ENCODE measurements at regions of chr10 and their contacts with region 1.

Region 1: DNA sequence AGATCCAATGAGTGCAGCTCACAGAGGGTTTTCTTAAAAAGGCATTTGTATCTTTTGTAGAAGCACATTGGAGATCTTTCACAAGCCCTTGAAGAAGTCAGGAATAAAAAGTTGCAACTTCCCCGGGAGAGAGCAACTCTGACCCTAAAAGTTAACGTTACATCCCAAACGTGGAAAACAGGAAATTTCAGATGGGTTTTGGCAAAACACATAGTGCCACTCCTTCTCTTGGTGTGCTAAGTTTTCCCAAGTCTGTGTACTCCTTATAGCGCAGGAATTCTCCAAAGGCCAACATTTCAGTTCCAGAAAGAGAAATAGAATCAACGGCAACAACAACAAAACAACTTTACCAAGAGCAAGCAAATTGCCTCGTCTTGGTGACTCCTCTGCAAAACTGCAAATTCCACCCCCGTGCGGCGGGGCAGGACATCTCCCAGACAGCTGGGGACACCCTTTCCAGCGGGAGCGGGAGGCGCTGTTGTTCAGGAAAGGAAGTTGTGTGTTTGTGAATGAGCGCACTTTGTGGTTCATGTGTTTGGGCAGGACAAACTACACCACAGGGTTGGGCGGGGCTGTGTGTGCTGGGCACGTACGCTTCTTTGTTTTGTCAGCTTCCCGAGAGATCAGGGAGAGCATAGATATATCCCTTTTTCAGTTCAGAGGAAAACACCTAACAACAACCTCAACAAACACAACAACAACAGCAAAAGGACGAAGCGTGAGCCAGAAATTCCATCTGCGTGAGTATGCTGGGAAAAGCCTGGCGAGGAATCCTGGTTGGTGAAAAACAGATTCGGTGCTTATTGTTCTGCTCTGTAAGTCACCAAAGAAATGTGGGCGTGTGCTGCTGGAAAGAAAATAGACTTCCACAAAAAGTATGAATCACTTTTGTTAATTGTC is 294.7 kb upstream of the PITRM1 start:
- DNase-seq: peak; percentile 89
- ATAC-seq: peak; percentile 69

Region 2: GRCh38 chr10:3372281-3372680 is 95.0 kb before region 1 on chr10:
- intact Hi-C with region 1: no loop called
- DNase-seq: no peak
- ATAC-seq: no peak

Region 3: GRCh38 chr10:3776796-3777571 is 309.7 kb after region 1 on chr10:
- intact Hi-C with region 1: loop called (anchors 10 kb)
- DNase-seq: no peak
- ATAC-seq: no peak